Common myeloid progenitor, CD34-positive (primary cell): ENCODE measurements at regions of chr16 and their contacts with region 1.

Region 1: DNA sequence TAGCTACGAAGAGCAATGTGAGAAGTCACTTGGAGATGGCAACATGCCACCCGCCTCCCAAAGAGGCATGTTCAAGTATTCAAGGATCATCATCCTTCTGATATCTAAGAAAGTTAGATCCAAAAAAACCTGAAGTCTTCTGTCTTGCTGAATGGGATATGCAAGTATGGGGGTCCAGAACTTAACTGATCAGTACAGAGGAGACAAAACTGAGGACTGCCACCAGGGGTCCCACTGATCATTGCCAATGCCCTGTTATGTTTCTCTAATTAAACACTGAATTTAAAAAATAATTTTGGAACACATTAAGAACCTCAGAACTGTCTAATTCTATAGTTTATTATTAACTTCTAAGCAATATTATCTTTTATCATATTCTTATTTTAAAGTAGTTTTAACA is 99.7 kb downstream of the CDH8 start:
- DNase-seq: peak in 2 of 3 donors; percentile 0 to 4
- H3K4me3 ChIP-seq: no peak overlapping the region
- H3K27ac ChIP-seq: no peak overlapping the region
- H3K4me1 ChIP-seq: no peaks in the 10 kb centered on the region
- H3K27me3 ChIP-seq: no peaks in the 10 kb centered on the region

Region 2: DNA sequence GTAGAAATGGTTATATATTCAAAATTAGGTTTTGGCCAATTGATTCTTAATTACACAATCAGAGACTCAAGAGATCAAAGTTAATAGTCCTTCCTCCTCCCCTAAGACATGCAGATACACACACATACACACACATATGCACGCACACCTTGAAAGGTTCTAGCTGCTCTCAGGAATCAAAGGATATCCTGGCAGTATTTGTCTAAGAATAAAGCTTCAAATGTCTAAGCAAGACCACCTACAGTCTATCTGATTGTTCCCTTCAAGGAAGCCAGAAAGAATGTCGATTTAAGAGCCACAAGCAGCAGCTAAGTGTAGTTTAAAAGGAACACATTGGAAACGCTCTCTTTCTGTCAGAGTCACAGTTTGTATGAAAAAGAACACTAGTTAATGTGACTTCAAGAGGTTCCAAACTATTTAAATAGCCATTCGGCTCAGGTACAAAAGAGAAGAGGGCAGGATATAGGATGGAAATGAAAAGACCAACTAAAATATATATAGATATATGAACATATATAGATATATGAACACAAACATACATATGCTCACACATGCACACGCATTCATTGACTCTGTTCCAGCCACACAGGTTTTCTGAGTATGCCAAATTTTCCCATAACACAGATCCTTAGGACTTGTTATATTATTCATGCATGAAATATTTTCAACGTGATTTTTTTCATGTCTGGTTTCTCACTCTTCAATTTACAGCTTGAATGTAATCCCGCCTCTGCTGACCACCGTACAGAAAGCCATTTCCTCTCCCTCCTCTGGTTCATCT is 20.7 kb after region 1 on chr16:
- CTCF ChIA-PET with region 1: no interaction called
- POLR2A ChIA-PET with region 1: no interaction called
- DNase-seq: no peak
- H3K4me3 ChIP-seq: no peak overlapping the region
- H3K27ac ChIP-seq: no peak overlapping the region
- H3K4me1 ChIP-seq: no peaks in the 10 kb centered on the region
- H3K27me3 ChIP-seq: no peaks in the 10 kb centered on the region

Region 3: GRCh38 chr16:62079236-62079635 is 142.7 kb after region 1 on chr16:
- CTCF ChIA-PET with region 1: no interaction called
- POLR2A ChIA-PET with region 1: interaction called, 12 read pairs
- DNase-seq: no peak
- H3K4me3 ChIP-seq: no peak overlapping the region
- H3K27ac ChIP-seq: no peak overlapping the region
- H3K4me1 ChIP-seq: no peaks in the 10 kb centered on the region
- H3K27me3 ChIP-seq: no peaks in the 10 kb centered on the region